CD8-positive, alpha-beta T cell (primary cell): ENCODE measurements at regions of chr4 and their contacts with region 1.

Region 1: DNA sequence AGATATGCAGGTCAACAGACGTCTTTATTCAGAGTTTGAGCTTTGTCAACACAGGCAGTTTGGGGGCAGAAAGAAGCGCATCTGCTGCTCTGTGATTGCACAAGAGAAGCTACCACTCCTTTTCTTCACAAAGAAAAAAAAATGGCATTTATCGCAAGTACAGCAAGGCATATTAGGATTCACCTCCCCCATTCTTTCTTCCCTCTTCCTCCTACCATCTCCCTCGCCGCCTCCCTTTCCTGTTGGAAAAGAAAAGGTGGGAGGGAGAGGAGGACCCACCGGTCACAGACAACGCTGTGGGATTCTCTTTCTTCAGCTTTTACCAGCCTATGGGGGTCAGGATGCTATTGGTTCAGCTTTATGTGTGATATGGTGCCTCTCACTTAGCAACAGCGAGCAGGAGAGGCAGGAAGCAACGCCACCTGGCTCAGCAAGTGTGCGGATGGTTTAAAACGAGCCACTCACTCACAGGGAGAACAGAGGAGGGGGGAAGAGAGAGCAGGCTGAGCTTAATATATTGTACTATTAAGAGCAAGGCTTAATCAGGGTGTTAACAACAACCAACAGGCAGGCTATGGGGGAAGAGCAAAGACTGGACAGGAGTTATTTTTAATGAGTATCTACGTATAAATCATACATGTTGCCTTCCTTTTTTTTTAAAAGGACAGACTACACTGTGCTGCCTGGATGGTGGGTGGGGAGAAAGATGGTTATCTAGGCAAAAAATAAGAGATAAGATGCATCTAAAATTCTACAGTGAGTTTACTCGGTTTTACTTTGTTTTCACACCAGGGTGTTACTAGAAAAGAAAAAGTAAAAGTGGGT is 104.7 kb downstream of the MAML3 start:
- DNase-seq: peak; percentile 8 to 80 (median 58)
- ATAC-seq: peak; percentile 95
- H3K4me3 ChIP-seq: peak overlapping the region; percentile 13 to 55
- H3K4me3 Mint-ChIP-seq: peak overlapping the region; percentile 81
- H3K27ac ChIP-seq: peak overlapping the region; percentile 31 to 55
- H3K27ac Mint-ChIP-seq: peak overlapping the region; percentile 87
- H3K4me1 ChIP-seq: peaks cover 34% of the 10 kb centered on the region
- H3K4me1 Mint-ChIP-seq: peaks cover 49% of the 10 kb centered on the region
- H3K27me3 ChIP-seq: no peaks in the 10 kb centered on the region
- H3K27me3 Mint-ChIP-seq: no peaks in the 10 kb centered on the region
- CTCF ChIP-seq: no peak

Region 2: GRCh38 chr4:140071806-140072205 is 22.6 kb after region 1 on chr4:
- CTCF ChIA-PET with region 1: interaction called, 3 read pairs
- POLR2A ChIA-PET with region 1: interaction called, 4 read pairs
- intact Hi-C with region 1: loop called in 1 of 2 experiments (anchors 1 kb)
- DNase-seq: peak; percentile 27 to 88 (median 62)
- ATAC-seq: peak; percentile 88
- H3K4me3 ChIP-seq: no peak overlapping the region
- H3K4me3 Mint-ChIP-seq: peak overlapping the region; percentile 74
- H3K27ac ChIP-seq: no peak overlapping the region
- H3K27ac Mint-ChIP-seq: peak overlapping the region; percentile 90
- H3K4me1 ChIP-seq: peaks cover 28% of the 10 kb centered on the region
- H3K4me1 Mint-ChIP-seq: peaks cover 48% of the 10 kb centered on the region
- H3K27me3 ChIP-seq: peaks cover 0 to 2% of the 10 kb centered on the region in 2 experiments
- H3K27me3 Mint-ChIP-seq: no peaks in the 10 kb centered on the region
- CTCF ChIP-seq: no peak

Region 3: DNA sequence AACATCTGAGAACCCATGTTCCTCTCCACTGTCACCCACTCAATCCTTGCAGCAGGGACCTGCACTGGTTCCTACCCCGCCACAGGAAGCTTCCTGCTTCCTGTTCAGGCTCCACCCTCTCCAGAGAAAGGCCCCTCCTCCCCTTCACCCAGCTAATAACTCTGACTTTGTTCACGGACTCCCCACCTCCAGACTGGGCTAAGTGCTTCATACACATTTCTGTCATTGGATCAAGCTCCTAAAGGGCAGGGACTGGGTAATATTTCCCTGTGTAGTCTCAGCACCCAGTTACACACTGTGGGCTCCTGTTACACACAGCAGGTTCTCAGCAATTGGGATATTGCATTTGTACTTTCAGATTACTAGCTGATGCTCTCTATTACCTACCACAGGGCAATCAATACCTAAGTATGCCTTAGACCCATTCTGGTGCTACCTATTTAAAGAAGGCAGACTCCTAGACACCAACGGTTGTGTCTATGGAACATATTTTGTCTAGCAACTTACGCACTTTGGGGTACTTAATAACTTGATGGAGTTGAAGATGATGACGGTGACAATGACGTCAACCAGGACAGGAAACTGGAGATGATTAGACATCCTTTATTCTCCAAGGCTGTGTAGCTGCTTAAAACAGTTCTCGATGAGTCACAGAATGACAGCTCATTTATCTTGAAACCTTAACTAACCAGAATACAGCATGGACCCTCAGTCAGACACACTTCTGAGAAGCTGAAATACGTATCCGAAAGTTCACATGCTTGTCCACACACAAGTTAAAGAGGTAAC is 46.7 kb after region 1 on chr4:
- CTCF ChIA-PET with region 1: interaction called, 3 read pairs
- POLR2A ChIA-PET with region 1: no interaction called
- intact Hi-C with region 1: loop called (anchors 2 to 5 kb)
- DNase-seq: peak in 7 of 9 experiments; percentile 8 to 89 (median 68)
- ATAC-seq: peak; percentile 74
- H3K4me3 ChIP-seq: peak overlapping the region; percentile 7 to 19
- H3K4me3 Mint-ChIP-seq: peak overlapping the region; percentile 76
- H3K27ac ChIP-seq: peak overlapping the region; percentile 51 to 65
- H3K27ac Mint-ChIP-seq: peak overlapping the region; percentile 93
- H3K4me1 ChIP-seq: peaks cover 55% of the 10 kb centered on the region
- H3K4me1 Mint-ChIP-seq: peaks cover 76% of the 10 kb centered on the region
- H3K27me3 ChIP-seq: no peaks in the 10 kb centered on the region
- H3K27me3 Mint-ChIP-seq: no peaks in the 10 kb centered on the region
- CTCF ChIP-seq: no peak

Region 4: GRCh38 chr4:140116442-140117104 is 67.3 kb after region 1 on chr4:
- CTCF ChIA-PET with region 1: no interaction called
- POLR2A ChIA-PET with region 1: no interaction called
- intact Hi-C with region 1: loop called in 1 of 2 experiments (anchors 2 kb)
- DNase-seq: peak in 4 of 9 experiments; percentile 16 to 38 (median 24)
- ATAC-seq: peak; percentile 92
- H3K4me3 ChIP-seq: no peak overlapping the region
- H3K4me3 Mint-ChIP-seq: no peak overlapping the region
- H3K27ac ChIP-seq: no peak overlapping the region
- H3K27ac Mint-ChIP-seq: no peak overlapping the region
- H3K4me1 ChIP-seq: peaks cover 12% of the 10 kb centered on the region
- H3K4me1 Mint-ChIP-seq: peaks cover 20% of the 10 kb centered on the region
- H3K27me3 ChIP-seq: no peaks in the 10 kb centered on the region
- H3K27me3 Mint-ChIP-seq: no peaks in the 10 kb centered on the region
- CTCF ChIP-seq: no peak

Region 5: GRCh38 chr4:140637836-140638235 is 588.6 kb after region 1 on chr4:
- CTCF ChIA-PET with region 1: no interaction called
- POLR2A ChIA-PET with region 1: no interaction called
- intact Hi-C with region 1: no loop called
- DNase-seq: peak in 4 of 9 experiments; percentile 17 to 52 (median 26)
- ATAC-seq: no peak
- H3K4me3 ChIP-seq: no peak overlapping the region
- H3K4me3 Mint-ChIP-seq: no peak overlapping the region
- H3K27ac ChIP-seq: no peak overlapping the region
- H3K27ac Mint-ChIP-seq: no peak overlapping the region
- H3K4me1 ChIP-seq: no peaks in the 10 kb centered on the region
- H3K4me1 Mint-ChIP-seq: no peaks in the 10 kb centered on the region
- H3K27me3 ChIP-seq: no peaks in the 10 kb centered on the region
- H3K27me3 Mint-ChIP-seq: peaks cover 7% of the 10 kb centered on the region
- CTCF ChIP-seq: peak; percentile 45